Endothelial cell of umbilical vein (primary cell): ENCODE measurements at regions of chrX and their contacts with region 1.

Region 1: GRCh38 chrX:120797188-120797851 is 78.3 kb downstream of the CT47B1 start:
- DNase-seq: peak; percentile 78
- H3K4me3 ChIP-seq: no peak overlapping the region
- H3K27ac ChIP-seq: peak overlapping the region; percentile 86
- H3K4me1 ChIP-seq: peaks cover 54% of the 10 kb centered on the region
- H3K27me3 ChIP-seq: no peaks in the 10 kb centered on the region
- CTCF ChIP-seq: no peak
- POLR2A ChIP-seq: no peak

Region 2: GRCh38 chrX:120736989-120737388 is 60.3 kb before region 1 on chrX:
- CTCF ChIA-PET with region 1: no interaction called
- POLR2A ChIA-PET with region 1: no interaction called
- dilution Hi-C with region 1: no loop called
- intact Hi-C with region 1: loop called (anchors 1 kb)
- DNase-seq: peak; percentile 80
- H3K4me3 ChIP-seq: no peak overlapping the region
- H3K27ac ChIP-seq: peak overlapping the region; percentile 49
- H3K4me1 ChIP-seq: peaks cover 28% of the 10 kb centered on the region
- H3K27me3 ChIP-seq: no peaks in the 10 kb centered on the region
- CTCF ChIP-seq: no peak
- POLR2A ChIP-seq: peak; percentile 26